GM10248 (cell line): ENCODE measurements at regions of chr16 and their contacts with region 1.

Region 1: GRCh38 chr16:82229796-82230619 is 60.0 kb upstream of the MPHOSPH6 start:
- DNase-seq: peak; percentile 43
- CTCF ChIP-seq: peak; percentile 87

Region 2: GRCh38 chr16:82031116-82032084 is 198.6 kb before region 1 on chr16:
- CTCF ChIA-PET with region 1: interaction called, 13 read pairs
- POLR2A ChIA-PET with region 1: no interaction called
- DNase-seq: peak; percentile 43
- CTCF ChIP-seq: no peak

Region 3: GRCh38 chr16:82240111-82240510 is 10.1 kb after region 1 on chr16:
- CTCF ChIA-PET with region 1: interaction called, 25 read pairs
- POLR2A ChIA-PET with region 1: no interaction called
- DNase-seq: no peak
- CTCF ChIP-seq: no peak